Calu3 (cell line): ENCODE measurements at regions of chr7 and their contacts with region 1.

Region 1: GRCh38 chr7:26667500-26668133 is 196.8 kb downstream of the SKAP2 start:
- DNase-seq: peak; percentile 92
- H3K4me3 Mint-ChIP-seq: no peak overlapping the region
- H3K27ac Mint-ChIP-seq: peak overlapping the region; percentile 63
- H3K4me1 Mint-ChIP-seq: peaks cover 57% of the 10 kb centered on the region
- H3K27me3 Mint-ChIP-seq: no peaks in the 10 kb centered on the region
- CTCF ChIP-seq: peak; percentile 96

Region 2: DNA sequence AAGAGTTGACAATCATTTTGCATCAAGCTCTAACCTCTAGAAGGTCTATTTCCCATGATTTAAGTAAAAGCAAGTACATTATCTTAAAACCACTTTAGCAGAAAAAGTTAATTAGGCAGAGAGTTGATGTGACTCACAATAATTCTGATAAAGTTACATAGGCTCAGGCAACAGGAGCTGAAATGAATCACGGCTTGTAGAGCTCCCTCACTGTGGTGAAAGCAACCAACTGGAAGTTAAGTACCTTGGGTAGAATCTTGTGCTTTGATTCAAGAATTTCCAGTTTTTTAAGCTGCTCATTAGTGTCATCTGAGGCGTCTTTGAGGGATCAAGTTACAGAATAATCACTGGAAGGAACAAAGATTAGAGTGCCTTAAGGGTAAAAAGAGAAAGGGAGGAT is 584.5 kb before region 1 on chr7:
- CTCF ChIA-PET with region 1: no interaction called
- intact Hi-C with region 1: loop called (anchors 10 kb)
- DNase-seq: no peak
- H3K4me3 Mint-ChIP-seq: no peak overlapping the region
- H3K27ac Mint-ChIP-seq: no peak overlapping the region
- H3K4me1 Mint-ChIP-seq: peaks cover 20% of the 10 kb centered on the region
- H3K27me3 Mint-ChIP-seq: peaks cover 26% of the 10 kb centered on the region
- CTCF ChIP-seq: no peak

Region 3: DNA sequence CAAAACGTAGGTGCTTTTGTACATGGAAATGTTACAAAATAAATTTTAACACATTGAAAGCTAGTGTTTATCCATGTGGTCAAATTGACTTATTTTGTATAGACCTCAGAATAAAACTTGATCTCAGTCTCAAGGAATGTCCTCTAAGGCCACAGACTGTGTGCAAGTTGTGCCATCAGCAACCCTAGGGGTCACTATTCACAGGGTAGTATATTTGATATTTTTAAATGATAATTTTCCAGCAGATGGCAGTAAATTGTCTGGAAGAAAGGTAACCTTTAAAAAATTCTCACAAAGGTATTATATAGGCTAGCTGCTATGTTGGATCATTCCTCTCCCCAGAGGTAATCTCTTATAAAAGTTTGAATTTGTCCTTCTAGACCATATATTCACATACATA is 388.8 kb before region 1 on chr7:
- CTCF ChIA-PET with region 1: no interaction called
- intact Hi-C with region 1: loop called (anchors 2 kb)
- DNase-seq: peak; percentile 13
- H3K4me3 Mint-ChIP-seq: no peak overlapping the region
- H3K27ac Mint-ChIP-seq: no peak overlapping the region
- H3K4me1 Mint-ChIP-seq: no peaks in the 10 kb centered on the region
- H3K27me3 Mint-ChIP-seq: no peaks in the 10 kb centered on the region
- CTCF ChIP-seq: peak; percentile 57

Region 4: GRCh38 chr7:26398756-26399501 is 268.7 kb before region 1 on chr7:
- CTCF ChIA-PET with region 1: interaction called, 5 read pairs
- intact Hi-C with region 1: loop called (anchors 1 kb)
- DNase-seq: peak; percentile 72
- H3K4me3 Mint-ChIP-seq: peak overlapping the region; percentile 92
- H3K27ac Mint-ChIP-seq: peak overlapping the region; percentile 72
- H3K4me1 Mint-ChIP-seq: peaks cover 38% of the 10 kb centered on the region
- H3K27me3 Mint-ChIP-seq: no peaks in the 10 kb centered on the region
- CTCF ChIP-seq: no peak

Region 5: GRCh38 chr7:26549281-26549943 is 118.2 kb before region 1 on chr7:
- CTCF ChIA-PET with region 1: interaction called, 17 read pairs
- intact Hi-C with region 1: loop called (anchors 2 kb)
- DNase-seq: peak; percentile 94
- H3K4me3 Mint-ChIP-seq: peak overlapping the region; percentile 12
- H3K27ac Mint-ChIP-seq: peak overlapping the region; percentile 85
- H3K4me1 Mint-ChIP-seq: peaks cover 70% of the 10 kb centered on the region
- H3K27me3 Mint-ChIP-seq: no peaks in the 10 kb centered on the region
- CTCF ChIP-seq: peak; percentile 45